GM10248 (cell line): ENCODE measurements at regions of chr9 and their contacts with region 1.

Region 1: GRCh38 chr9:19369107-19369506 is 10.9 kb downstream of the RPS6 start:
- DNase-seq: no peak
- CTCF ChIP-seq: no peak

Region 2: GRCh38 chr9:19379697-19380046 is 10.6 kb after region 1 on chr9:
- CTCF ChIA-PET with region 1: interaction called, 7 read pairs
- POLR2A ChIA-PET with region 1: interaction called, 17 read pairs
- DNase-seq: peak; percentile 28
- CTCF ChIP-seq: no peak